ENCODE measurements at regions of chr19 and their contacts with region 1.

Region 1: DNA sequence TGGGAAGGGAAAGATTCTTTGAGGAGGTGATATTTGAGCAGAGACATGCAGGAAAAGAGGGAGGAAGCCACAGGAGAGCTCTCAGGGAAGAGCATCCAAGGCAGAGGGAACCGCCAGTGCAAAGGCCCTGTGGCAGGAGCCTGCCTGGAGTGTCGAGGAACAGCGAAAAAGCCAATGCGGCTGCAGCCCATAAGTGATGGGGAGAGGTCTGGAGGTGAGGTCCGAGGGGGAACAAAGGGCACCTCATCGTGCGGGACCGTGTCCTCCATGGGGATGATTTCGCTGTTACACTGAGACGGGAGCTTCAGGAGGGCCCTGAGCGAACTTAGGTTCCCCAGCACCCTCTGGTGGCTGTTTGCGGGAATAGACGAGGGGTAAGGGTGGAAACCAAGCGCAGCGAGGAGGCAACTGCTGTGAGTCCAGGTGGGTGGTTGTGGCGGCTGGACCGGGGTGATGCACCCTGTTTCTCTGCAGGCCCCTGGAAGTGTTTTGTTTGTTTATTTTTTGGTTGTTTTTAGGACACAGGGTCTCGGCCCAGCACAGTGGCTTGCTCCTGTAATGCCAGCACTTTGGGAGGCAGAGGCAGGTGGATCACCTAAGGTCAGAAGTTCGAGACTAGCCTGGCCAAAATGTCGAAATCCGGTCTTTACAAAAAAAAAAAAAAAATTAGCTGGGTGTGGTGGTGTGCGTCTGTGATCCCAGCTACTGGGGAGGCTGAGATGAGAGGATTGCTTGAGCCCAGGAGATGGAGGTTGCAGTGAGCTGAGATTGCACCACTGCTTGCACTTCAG is 5.9 kb upstream of the EHD2 start:
- DNase-seq: peak; percentile 75
- ATAC-seq: peak; percentile 89
- H3K4me3 ChIP-seq: no peak overlapping the region
- H3K27ac ChIP-seq: no peak overlapping the region
- H3K4me1 ChIP-seq: peaks cover 5% of the 10 kb centered on the region
- H3K27me3 ChIP-seq: no peaks in the 10 kb centered on the region
- CTCF ChIP-seq: peak; percentile 88
- POLR2A ChIP-seq: 0 out of 2 replicates have a peak, but pooled peaks have one; percentile 27
- RAD21 ChIP-seq: peak; percentile 89

Region 2: DNA sequence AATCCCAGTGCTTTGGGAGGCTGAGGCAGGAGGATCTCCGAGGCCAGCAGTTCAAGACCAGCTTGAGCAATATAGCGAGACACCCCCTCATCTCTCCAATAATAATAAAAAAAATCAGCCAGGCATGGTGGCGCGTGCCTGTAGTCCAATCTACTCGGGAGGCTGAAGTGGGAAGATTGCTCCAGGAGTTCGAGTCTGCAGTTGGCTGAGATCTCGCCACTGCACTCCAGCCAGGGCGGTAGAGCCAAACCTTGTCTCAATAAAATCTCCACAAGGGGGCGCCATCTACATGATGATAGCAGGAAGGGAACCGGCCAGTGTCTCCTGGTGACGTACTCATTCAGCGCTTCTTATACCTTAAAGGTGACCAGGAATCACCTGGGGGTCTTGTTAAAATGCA is 411.3 kb before region 1 on chr19:
- CTCF ChIA-PET with region 1: no interaction called
- POLR2A ChIA-PET with region 1: no interaction called
- dilution Hi-C with region 1: no loop called
- in situ Hi-C with region 1: loop called (anchors 25 kb)
- intact Hi-C with region 1: no loop called
- DNase-seq: peak; percentile 74
- ATAC-seq: peak; percentile 97
- H3K4me3 ChIP-seq: no peak overlapping the region
- H3K27ac ChIP-seq: no peak overlapping the region
- H3K4me1 ChIP-seq: no peaks in the 10 kb centered on the region
- H3K27me3 ChIP-seq: no peaks in the 10 kb centered on the region
- CTCF ChIP-seq: peak; percentile 84
- POLR2A ChIP-seq: no peak
- RAD21 ChIP-seq: peak; percentile 90

Region 3: GRCh38 chr19:47863514-47863936 is 156.2 kb after region 1 on chr19:
- CTCF ChIA-PET with region 1: no interaction called
- POLR2A ChIA-PET with region 1: no interaction called
- dilution Hi-C with region 1: no loop called
- in situ Hi-C with region 1: no loop called
- intact Hi-C with region 1: no loop called
- DNase-seq: peak; percentile 55
- ATAC-seq: peak; percentile 100
- H3K4me3 ChIP-seq: no peak overlapping the region
- H3K27ac ChIP-seq: no peak overlapping the region
- H3K4me1 ChIP-seq: no peaks in the 10 kb centered on the region
- H3K27me3 ChIP-seq: peaks cover 6% of the 10 kb centered on the region
- CTCF ChIP-seq: peak; percentile 88
- POLR2A ChIP-seq: no peak
- RAD21 ChIP-seq: peak; percentile 77

Region 4: GRCh38 chr19:47886010-47886559 is 178.8 kb after region 1 on chr19 and contains the start of gene SULT2A1:
- CTCF ChIA-PET with region 1: no interaction called
- POLR2A ChIA-PET with region 1: no interaction called
- dilution Hi-C with region 1: no loop called
- in situ Hi-C with region 1: no loop called
- intact Hi-C with region 1: no loop called
- DNase-seq: no peak
- ATAC-seq: no peak
- H3K4me3 ChIP-seq: no peak within 1 kb of the TSS
- H3K27ac ChIP-seq: no peak within 1 kb of the TSS
- H3K4me1 ChIP-seq: no peaks in the 10 kb centered on the region
- H3K27me3 ChIP-seq: 0 out of 2 replicates have a peak, but pooled peaks cover 3% of the 10 kb centered on the region
- CTCF ChIP-seq: no peak
- POLR2A ChIP-seq: no peak
- RAD21 ChIP-seq: no peak
- total RNA-seq, gene SULT2A1: not detected in 2 replicates

Measured in IMR-90 (cell line).